GM23248 (cell line): ENCODE measurements at regions of chr10 and their contacts with region 1.

Region 1: GRCh38 chr10:30534465-30535144 is 94.9 kb downstream of the LYZL2 start:
- DNase-seq: peak; percentile 80
- H3K4me3 ChIP-seq: no peak overlapping the region
- H3K27ac ChIP-seq: no peak overlapping the region
- H3K4me1 ChIP-seq: peaks cover 6% of the 10 kb centered on the region
- H3K27me3 ChIP-seq: no peaks in the 10 kb centered on the region

Region 2: GRCh38 chr10:29455095-29455494 is 1079.5 kb before region 1 on chr10:
- in situ Hi-C with region 1: no loop called
- DNase-seq: no peak
- H3K4me3 ChIP-seq: no peak overlapping the region
- H3K27ac ChIP-seq: no peak overlapping the region
- H3K4me1 ChIP-seq: no peaks in the 10 kb centered on the region
- H3K27me3 ChIP-seq: no peaks in the 10 kb centered on the region

Region 3: GRCh38 chr10:30413996-30414576 is 120.5 kb before region 1 on chr10:
- in situ Hi-C with region 1: loop called (anchors 10 kb)
- DNase-seq: peak; percentile 83
- H3K4me3 ChIP-seq: no peak overlapping the region
- H3K27ac ChIP-seq: no peak overlapping the region
- H3K4me1 ChIP-seq: no peaks in the 10 kb centered on the region
- H3K27me3 ChIP-seq: no peaks in the 10 kb centered on the region